IMR-90 (cell line): ENCODE measurements at regions of chr4 and their contacts with region 1.

Region 1: DNA sequence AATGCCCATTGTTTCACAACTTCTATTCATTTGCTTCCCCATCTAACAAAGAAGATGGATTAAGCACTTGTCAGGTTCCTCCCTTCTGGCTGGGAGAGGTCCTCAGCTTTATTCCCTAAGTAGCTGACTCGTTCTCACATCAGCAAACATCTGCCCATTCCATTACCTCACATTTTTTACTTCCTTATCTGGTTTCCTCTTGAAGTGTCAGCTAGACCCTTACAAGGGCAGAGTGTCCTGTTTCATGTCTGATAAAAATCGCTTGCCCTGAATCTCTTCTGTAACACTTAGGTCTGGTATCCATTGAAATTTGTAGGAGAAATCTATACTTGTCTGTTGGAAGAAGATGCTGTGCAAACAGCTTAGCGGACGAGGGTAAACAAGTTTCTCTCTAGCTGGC is 34.7 kb downstream of the TMPRSS11A start:
- DNase-seq: no peak
- ATAC-seq: no peak
- H3K4me3 ChIP-seq: no peak overlapping the region
- H3K27ac ChIP-seq: no peak overlapping the region
- H3K4me1 ChIP-seq: no peaks in the 10 kb centered on the region
- H3K27me3 ChIP-seq: no peaks in the 10 kb centered on the region; the same call in 1 of the 2 replicates
- CTCF ChIP-seq: no peak
- POLR2A ChIP-seq: no peak
- RAD21 ChIP-seq: no peak

Region 2: GRCh38 chr4:67885762-67886161 is 42.8 kb before region 1 on chr4:
- CTCF ChIA-PET with region 1: interaction called, 4 read pairs
- POLR2A ChIA-PET with region 1: no interaction called
- dilution Hi-C with region 1: no loop called
- in situ Hi-C with region 1: no loop called
- intact Hi-C with region 1: loop called (anchors 1 kb)
- DNase-seq: peak; percentile 98
- ATAC-seq: peak; percentile 96
- H3K4me3 ChIP-seq: no peak overlapping the region
- H3K27ac ChIP-seq: peak overlapping the region; percentile 10; the same call in 1 of the 2 replicates
- H3K4me1 ChIP-seq: no peaks in the 10 kb centered on the region; the same call in 1 of the 2 replicates
- H3K27me3 ChIP-seq: no peaks in the 10 kb centered on the region
- CTCF ChIP-seq: no peak
- POLR2A ChIP-seq: no peak
- RAD21 ChIP-seq: no peak